AG04450 (cell line): ENCODE measurements at regions of chr1 and their contacts with region 1.

Region 1: GRCh38 chr1:21216835-21217811 is 40.4 kb upstream of the EIF4G3 start:
- DNase-seq: no peak
- H3K4me3 ChIP-seq: no peak overlapping the region
- H3K27ac ChIP-seq: peak overlapping the region; percentile 21
- H3K27me3 ChIP-seq: no peaks in the 10 kb centered on the region
- CTCF ChIP-seq: peak; percentile 73

Region 2: DNA sequence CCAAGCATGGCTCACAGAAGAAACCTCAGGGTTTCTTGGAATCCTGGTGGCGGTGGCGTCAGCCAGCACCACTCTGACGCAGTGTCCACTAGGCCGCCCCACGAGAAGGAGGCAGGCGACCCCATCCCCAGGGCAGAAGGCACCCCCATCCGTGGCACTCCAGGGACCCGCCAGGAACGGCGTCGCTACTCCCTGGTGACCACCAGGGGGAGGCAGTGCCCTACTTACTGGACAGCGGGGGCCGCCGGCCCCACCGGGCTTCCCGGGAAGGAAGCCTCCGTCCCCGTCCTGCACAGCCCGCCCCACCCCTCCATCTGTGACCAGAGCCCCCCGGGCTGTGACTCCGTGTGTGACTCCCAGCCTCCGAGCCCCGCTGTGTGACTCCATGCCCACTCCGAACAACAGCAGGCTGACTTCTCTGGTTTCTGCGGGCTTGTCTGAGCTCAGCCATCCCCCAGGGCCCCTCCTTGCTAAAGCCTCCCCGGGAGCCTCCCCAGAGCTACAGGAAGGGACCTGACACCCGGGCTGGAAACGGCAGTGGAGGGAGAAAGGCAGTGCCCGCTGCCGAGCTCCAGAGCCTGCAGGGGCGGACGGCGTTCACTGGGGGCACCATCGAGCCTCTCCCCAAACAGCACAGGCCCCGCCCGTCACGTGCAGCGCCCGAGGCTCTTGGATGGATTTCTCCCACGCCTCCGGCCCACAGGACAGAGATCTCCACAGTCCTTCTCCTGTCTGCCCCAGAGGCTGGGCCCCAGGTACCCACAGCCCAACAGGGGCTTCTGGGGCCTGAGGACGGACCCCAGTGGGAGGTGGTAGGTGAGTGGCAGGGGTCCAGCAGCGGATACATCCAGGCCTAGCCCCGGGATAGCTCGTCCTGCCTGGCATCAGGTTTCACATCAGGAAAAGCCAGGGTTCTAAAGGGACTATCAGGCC is 520.5 kb before region 1 on chr1:
- CTCF ChIA-PET with region 1: interaction called, 18 read pairs
- POLR2A ChIA-PET with region 1: no interaction called
- DNase-seq: peak; percentile 90
- H3K4me3 ChIP-seq: peak overlapping the region; percentile 65
- H3K27ac ChIP-seq: peak overlapping the region; percentile 99
- H3K27me3 ChIP-seq: no peaks in the 10 kb centered on the region
- CTCF ChIP-seq: peak; percentile 81

Region 3: GRCh38 chr1:21232044-21232443 is 14.9 kb after region 1 on chr1:
- CTCF ChIA-PET with region 1: interaction called, 10 read pairs
- POLR2A ChIA-PET with region 1: no interaction called
- DNase-seq: no peak
- H3K4me3 ChIP-seq: no peak overlapping the region
- H3K27ac ChIP-seq: no peak overlapping the region
- H3K27me3 ChIP-seq: no peaks in the 10 kb centered on the region
- CTCF ChIP-seq: peak; percentile 77

Region 4: GRCh38 chr1:21384620-21385019 is 167.5 kb after region 1 on chr1:
- CTCF ChIA-PET with region 1: no interaction called
- POLR2A ChIA-PET with region 1: no interaction called
- DNase-seq: no peak
- H3K4me3 ChIP-seq: no peak overlapping the region
- H3K27ac ChIP-seq: no peak overlapping the region
- H3K27me3 ChIP-seq: peaks cover 17% of the 10 kb centered on the region
- CTCF ChIP-seq: no peak

Region 5: DNA sequence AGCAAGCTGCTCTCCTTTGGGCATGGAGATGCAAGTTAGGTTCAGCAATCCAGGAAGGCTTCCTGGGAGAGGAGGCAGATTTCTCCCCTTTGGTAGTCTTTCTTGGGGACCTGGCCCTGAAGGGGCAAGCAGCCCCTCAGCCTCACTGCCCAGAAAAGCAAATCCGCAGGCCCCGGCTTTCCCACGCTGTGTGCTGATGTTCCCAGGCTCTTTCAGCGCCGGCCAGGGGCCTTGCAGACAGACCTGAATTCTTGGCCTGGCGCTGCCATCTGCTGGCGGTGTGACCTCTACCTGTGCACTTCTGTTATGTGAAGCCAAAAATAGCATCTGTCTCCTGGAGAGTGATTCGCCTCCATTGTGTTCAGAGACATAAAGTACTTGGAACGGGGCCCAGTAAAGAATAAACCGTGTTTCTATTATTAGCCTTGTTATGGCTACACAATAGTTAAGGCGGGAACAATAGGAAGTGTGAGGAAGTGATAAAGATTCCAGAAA is 356.9 kb after region 1 on chr1:
- CTCF ChIA-PET with region 1: no interaction called
- POLR2A ChIA-PET with region 1: no interaction called
- DNase-seq: no peak
- H3K4me3 ChIP-seq: no peak overlapping the region
- H3K27ac ChIP-seq: no peak overlapping the region
- H3K27me3 ChIP-seq: no peaks in the 10 kb centered on the region
- CTCF ChIP-seq: peak; percentile 68